Activated CD8-positive, alpha-beta T cell treated with anti-CD3 and anti-CD28 coated beads for 36 hours (primary cell): ENCODE measurements at regions of chr16 and their contacts with region 1.

Region 1: DNA sequence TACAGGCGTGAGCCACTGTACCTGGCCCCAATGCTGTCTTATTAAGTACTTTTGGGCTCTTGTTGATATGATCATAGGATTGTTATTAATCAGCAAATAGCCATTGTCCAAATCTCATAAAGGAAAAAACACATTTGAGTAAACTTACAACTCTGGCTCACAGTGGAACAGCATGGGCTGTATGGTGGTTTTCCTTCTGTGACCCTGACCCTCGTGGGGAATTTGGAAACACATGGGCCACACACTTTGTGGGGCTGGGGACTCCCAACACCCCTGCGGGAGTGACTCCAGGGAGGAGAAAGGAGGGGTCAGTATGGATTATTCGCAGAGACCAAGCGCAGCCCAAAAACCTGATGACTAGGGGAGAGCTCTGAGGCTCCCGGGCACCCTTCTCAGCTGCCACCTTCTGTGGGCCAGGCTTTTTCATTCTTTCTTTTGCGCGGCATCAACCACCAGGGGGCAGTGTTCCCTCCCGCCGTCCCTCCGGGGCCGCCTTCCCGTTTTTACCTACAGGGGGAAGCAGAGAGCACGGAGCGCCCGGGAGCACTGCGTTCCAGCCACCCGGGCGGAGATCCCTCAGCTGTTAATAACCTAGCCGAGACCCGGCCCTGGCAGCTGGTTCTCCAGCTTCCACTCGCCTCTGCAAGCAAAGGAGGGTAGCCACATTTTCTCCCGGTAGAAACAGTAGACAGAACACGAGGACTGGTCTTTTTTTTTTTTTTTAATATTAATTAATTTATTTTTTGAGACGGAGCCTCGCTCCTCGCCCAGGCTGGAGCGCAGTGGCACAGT is 9.7 kb downstream of the TSNAXIP1 start:
- DNase-seq: peak; percentile 90
- ATAC-seq: peak; percentile 99
- H3K4me3 Mint-ChIP-seq: peak overlapping the region; percentile 29
- H3K27ac Mint-ChIP-seq: no peak overlapping the region
- H3K4me1 Mint-ChIP-seq: peaks cover 5% of the 10 kb centered on the region
- H3K27me3 Mint-ChIP-seq: no peaks in the 10 kb centered on the region
- CTCF ChIP-seq: peak; percentile 100

Region 2: DNA sequence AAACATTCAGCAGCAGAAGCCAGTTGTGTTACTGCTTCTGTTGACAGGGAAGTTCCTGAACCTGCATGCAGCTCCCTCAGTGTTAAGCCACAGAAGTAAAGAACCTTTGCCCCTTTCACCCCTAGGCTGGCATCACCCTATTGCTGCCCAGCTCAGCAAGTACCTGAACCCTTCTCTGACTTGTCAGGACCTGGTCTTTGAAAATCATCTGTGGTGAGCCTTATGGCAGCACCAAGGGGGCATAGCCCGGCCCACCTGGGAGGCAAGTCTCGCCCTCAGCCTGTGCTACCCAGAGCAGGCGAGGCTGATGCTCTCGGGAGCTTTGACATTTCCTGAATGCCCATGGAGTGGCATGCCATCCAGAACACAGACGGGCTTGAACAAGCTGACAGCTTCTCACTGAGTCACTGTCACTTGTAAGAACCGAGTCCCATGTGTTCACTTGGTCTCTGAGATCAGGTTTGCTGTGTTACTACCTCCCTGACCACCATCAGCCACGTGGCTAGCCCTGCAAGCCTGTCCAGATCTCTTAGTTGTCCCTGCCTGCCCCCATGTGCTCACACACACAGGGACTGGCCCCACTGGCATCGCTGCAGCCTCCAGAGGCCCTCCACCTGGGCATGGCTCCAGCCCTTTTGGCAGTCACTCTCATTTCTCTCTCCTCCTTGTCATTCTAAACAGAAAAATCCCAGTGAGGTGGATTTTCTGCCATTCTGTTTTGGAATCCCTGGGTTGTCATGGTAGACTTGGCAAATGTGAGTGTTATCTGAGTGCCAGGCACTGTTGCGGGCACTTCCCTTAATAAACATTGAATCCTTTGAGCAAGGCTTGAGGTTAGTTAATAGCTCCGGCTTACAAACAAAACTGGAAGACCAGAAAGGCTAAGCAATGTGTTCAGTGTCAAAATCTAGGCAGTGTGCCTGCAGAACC is 174.4 kb before region 1 on chr16:
- CTCF ChIA-PET with region 1: no interaction called
- POLR2A ChIA-PET with region 1: no interaction called
- intact Hi-C with region 1: no loop called
- DNase-seq: no peak
- ATAC-seq: no peak
- H3K4me3 Mint-ChIP-seq: no peak overlapping the region
- H3K27ac Mint-ChIP-seq: no peak overlapping the region
- H3K4me1 Mint-ChIP-seq: peaks cover 11% of the 10 kb centered on the region
- H3K27me3 Mint-ChIP-seq: no peaks in the 10 kb centered on the region
- CTCF ChIP-seq: no peak

Region 3: DNA sequence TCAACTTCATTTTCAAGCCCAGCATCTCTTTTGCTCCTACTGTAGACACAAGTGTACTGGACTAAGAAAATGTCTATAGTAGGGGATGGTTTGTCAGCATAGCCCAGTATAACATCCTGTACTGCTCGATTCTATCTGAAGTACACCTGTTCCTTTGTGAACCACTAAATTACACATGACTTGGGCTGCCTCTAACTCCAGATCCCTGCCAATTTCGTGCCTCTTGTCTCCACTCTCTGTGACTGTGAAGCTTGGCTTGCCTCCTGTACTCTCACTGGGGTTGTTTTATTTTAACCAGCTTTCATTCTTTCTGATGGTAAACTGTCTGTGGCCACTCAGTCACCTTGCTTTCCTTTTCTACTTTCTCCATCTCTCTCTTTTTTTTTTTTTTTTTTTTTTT is 121.8 kb before region 1 on chr16:
- CTCF ChIA-PET with region 1: interaction called, 10 read pairs
- POLR2A ChIA-PET with region 1: no interaction called
- intact Hi-C with region 1: no loop called
- DNase-seq: no peak
- ATAC-seq: no peak
- H3K4me3 Mint-ChIP-seq: no peak overlapping the region
- H3K27ac Mint-ChIP-seq: no peak overlapping the region
- H3K4me1 Mint-ChIP-seq: no peaks in the 10 kb centered on the region
- H3K27me3 Mint-ChIP-seq: no peaks in the 10 kb centered on the region
- CTCF ChIP-seq: no peak

Region 4: DNA sequence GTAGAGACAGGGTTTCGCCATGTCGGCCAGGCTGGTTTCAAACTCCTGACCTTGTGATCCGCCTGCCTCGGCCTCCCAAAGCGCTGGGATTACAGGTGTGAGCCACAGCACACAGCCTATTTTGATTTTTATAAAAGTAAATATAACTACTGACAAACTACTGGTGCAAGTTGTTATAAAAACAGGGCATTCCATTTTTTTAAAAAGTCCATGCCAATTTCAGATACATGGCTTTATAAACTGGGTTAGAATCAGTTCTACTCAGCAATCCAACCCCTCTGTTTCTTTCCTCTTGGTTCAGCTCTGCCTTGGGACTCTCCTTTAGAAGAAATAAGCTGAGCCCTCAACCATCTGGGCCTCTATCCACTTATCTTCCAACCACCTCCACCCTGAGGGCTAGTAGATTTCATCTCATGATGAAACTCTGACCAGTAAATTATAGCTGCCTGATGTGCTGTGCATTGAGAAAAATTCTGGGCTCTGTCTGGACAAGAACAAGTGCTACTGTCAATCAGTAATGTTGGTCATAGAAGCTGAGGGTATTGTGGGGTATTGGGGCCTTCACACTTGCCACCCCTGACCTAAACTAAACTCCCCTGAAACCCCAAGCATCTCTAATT is 20.2 kb before region 1 on chr16:
- CTCF ChIA-PET with region 1: interaction called, 37 read pairs
- POLR2A ChIA-PET with region 1: no interaction called
- intact Hi-C with region 1: no loop called
- DNase-seq: no peak
- ATAC-seq: no peak
- H3K4me3 Mint-ChIP-seq: no peak overlapping the region
- H3K27ac Mint-ChIP-seq: no peak overlapping the region
- H3K4me1 Mint-ChIP-seq: peaks cover 20% of the 10 kb centered on the region
- H3K27me3 Mint-ChIP-seq: no peaks in the 10 kb centered on the region
- CTCF ChIP-seq: no peak

Region 5: GRCh38 chr16:67847064-67847861 is 30.8 kb after region 1 on chr16 and contains the start of gene CENPT:
- CTCF ChIA-PET with region 1: interaction called, 30 read pairs
- POLR2A ChIA-PET with region 1: no interaction called
- intact Hi-C with region 1: no loop called
- DNase-seq: peak; percentile 69
- ATAC-seq: peak; percentile 46
- H3K4me3 Mint-ChIP-seq: peak within 1 kb of the TSS; percentile 93
- H3K27ac Mint-ChIP-seq: peak within 1 kb of the TSS; percentile 94
- H3K4me1 Mint-ChIP-seq: peaks cover 39% of the 10 kb centered on the region
- H3K27me3 Mint-ChIP-seq: no peaks in the 10 kb centered on the region
- CTCF ChIP-seq: no peak
- total RNA-seq, gene CENPT: 40.4 to 42.2 TPM

Region 6: DNA sequence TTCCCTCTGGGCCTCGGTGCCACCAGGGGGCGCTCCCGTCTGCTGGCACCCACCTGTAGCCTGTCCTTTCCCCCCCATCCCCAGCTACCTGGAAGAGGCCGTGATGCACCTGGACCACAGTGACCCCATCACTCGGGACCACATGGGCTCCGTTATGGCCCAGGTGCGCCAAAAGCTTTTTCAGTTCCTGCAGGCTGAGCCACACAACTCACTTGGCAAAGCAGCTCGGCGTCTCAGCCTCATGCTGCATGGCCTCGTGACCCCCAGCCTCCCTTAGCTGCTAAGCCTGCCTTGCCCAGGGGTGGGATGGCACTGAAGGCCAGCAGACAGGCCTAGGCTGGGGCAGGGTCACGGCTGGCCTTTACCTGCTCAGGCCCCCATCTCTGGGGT is 67.4 kb after region 1 on chr16:
- CTCF ChIA-PET with region 1: interaction called, 18 read pairs
- POLR2A ChIA-PET with region 1: no interaction called
- intact Hi-C with region 1: no loop called
- DNase-seq: peak; percentile 83
- ATAC-seq: peak; percentile 87
- H3K4me3 Mint-ChIP-seq: no peak overlapping the region
- H3K27ac Mint-ChIP-seq: no peak overlapping the region
- H3K4me1 Mint-ChIP-seq: no peaks in the 10 kb centered on the region
- H3K27me3 Mint-ChIP-seq: no peaks in the 10 kb centered on the region
- CTCF ChIP-seq: peak; percentile 94

Region 7: GRCh38 chr16:67923414-67924116 is 107.1 kb after region 1 on chr16:
- CTCF ChIA-PET with region 1: interaction called, 28 read pairs
- POLR2A ChIA-PET with region 1: no interaction called
- intact Hi-C with region 1: loop called (anchors 5 kb)
- DNase-seq: no peak
- ATAC-seq: no peak
- H3K4me3 Mint-ChIP-seq: no peak overlapping the region
- H3K27ac Mint-ChIP-seq: peak overlapping the region; percentile 14
- H3K4me1 Mint-ChIP-seq: peaks cover 14% of the 10 kb centered on the region
- H3K27me3 Mint-ChIP-seq: no peaks in the 10 kb centered on the region
- CTCF ChIP-seq: no peak

Region 8: GRCh38 chr16:67942200-67942509 is 125.7 kb after region 1 on chr16:
- CTCF ChIA-PET with region 1: interaction called, 24 read pairs
- POLR2A ChIA-PET with region 1: interaction called, 4 read pairs
- intact Hi-C with region 1: no loop called
- DNase-seq: peak; percentile 59
- ATAC-seq: peak; percentile 66
- H3K4me3 Mint-ChIP-seq: no peak overlapping the region
- H3K27ac Mint-ChIP-seq: peak overlapping the region; percentile 59
- H3K4me1 Mint-ChIP-seq: peaks cover 33% of the 10 kb centered on the region
- H3K27me3 Mint-ChIP-seq: no peaks in the 10 kb centered on the region
- CTCF ChIP-seq: peak; percentile 61